Caco-2 (cell line): ENCODE measurements at regions of chr11 and their contacts with region 1.

Region 1: GRCh38 chr11:70746970-70747684 is 348.8 kb downstream of the CTTN start:
- DNase-seq: no peak
- H3K4me3 ChIP-seq: no peak overlapping the region
- H3K4me3 Mint-ChIP-seq: no peak overlapping the region
- H3K27ac Mint-ChIP-seq: no peak overlapping the region
- H3K4me1 ChIP-seq: peaks cover 11% of the 10 kb centered on the region; the same call in 1 of the 2 replicates
- H3K4me1 Mint-ChIP-seq: peaks cover 10% of the 10 kb centered on the region
- H3K27me3 ChIP-seq: no peaks in the 10 kb centered on the region
- H3K27me3 Mint-ChIP-seq: no peaks in the 10 kb centered on the region
- CTCF ChIP-seq: no peak

Region 2: DNA sequence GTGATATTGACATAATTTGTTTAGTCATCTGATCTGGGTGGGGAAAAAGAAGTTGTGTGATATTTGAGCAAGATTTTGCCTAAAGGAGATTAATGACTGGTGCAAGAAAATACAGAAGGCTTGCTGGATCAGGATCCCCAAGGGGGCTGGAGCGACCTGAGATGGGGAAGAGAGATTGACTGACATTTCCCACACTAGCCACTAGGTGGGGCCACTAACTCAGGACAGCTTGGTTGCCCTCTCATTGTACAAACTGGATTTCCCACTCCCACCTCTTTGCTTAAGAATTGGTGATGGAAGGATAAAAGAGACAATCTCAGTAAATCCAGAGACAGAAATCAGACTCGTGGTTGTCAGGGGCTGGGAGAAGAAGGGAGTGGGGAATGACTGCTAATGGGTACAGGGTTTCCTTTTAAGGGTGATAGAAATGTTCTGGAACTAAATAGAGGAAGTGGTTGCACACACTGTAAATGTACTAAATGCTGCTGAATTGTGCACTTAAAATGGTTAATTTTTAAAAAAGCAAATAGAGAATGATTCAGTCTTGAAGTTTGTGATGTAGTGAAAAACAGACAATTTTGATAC is 298.1 kb before region 1 on chr11:
- CTCF ChIA-PET with region 1: interaction called, 15 read pairs
- POLR2A ChIA-PET with region 1: no interaction called
- intact Hi-C with region 1: no loop called
- DNase-seq: no peak
- H3K4me3 ChIP-seq: no peak overlapping the region
- H3K4me3 Mint-ChIP-seq: no peak overlapping the region
- H3K27ac Mint-ChIP-seq: no peak overlapping the region
- H3K4me1 ChIP-seq: no peaks in the 10 kb centered on the region
- H3K4me1 Mint-ChIP-seq: no peaks in the 10 kb centered on the region
- H3K27me3 ChIP-seq: no peaks in the 10 kb centered on the region
- H3K27me3 Mint-ChIP-seq: no peaks in the 10 kb centered on the region
- CTCF ChIP-seq: peak; percentile 48 to 75